ENCODE measurements at regions of chr2 and their contacts with region 1.

Region 1: GRCh38 chr2:234494361-234495250 is 2.3 kb downstream of the ARL4C start:
- DNase-seq: no peak
- H3K4me3 Mint-ChIP-seq: peak overlapping the region; percentile 96
- H3K27ac Mint-ChIP-seq: peak overlapping the region; percentile 97
- H3K4me1 Mint-ChIP-seq: peaks cover 51% of the 10 kb centered on the region
- H3K27me3 Mint-ChIP-seq: no peaks in the 10 kb centered on the region

Region 2: GRCh38 chr2:234003972-234004617 is 490.5 kb before region 1 on chr2:
- CTCF ChIA-PET with region 1: no interaction called
- POLR2A ChIA-PET with region 1: no interaction called
- intact Hi-C with region 1: loop called (anchors 5 kb)
- DNase-seq: peak; percentile 71
- H3K4me3 Mint-ChIP-seq: no peak overlapping the region
- H3K27ac Mint-ChIP-seq: no peak overlapping the region
- H3K4me1 Mint-ChIP-seq: peaks cover 38% of the 10 kb centered on the region
- H3K27me3 Mint-ChIP-seq: no peaks in the 10 kb centered on the region

Measured in activated CD4-positive, alpha-beta memory T cell treated with anti-CD3 and anti-CD28 coated beads for 36 hours (primary cell).